Activated CD4-positive, alpha-beta T cell treated with anti-CD3 and anti-CD28 coated beads, Interleukin-2, amount 10 ng/mL, durations not matched to agents 24 days and 14 days (primary cell): ENCODE measurements at regions of chr4 and their contacts with region 1.

Region 1: DNA sequence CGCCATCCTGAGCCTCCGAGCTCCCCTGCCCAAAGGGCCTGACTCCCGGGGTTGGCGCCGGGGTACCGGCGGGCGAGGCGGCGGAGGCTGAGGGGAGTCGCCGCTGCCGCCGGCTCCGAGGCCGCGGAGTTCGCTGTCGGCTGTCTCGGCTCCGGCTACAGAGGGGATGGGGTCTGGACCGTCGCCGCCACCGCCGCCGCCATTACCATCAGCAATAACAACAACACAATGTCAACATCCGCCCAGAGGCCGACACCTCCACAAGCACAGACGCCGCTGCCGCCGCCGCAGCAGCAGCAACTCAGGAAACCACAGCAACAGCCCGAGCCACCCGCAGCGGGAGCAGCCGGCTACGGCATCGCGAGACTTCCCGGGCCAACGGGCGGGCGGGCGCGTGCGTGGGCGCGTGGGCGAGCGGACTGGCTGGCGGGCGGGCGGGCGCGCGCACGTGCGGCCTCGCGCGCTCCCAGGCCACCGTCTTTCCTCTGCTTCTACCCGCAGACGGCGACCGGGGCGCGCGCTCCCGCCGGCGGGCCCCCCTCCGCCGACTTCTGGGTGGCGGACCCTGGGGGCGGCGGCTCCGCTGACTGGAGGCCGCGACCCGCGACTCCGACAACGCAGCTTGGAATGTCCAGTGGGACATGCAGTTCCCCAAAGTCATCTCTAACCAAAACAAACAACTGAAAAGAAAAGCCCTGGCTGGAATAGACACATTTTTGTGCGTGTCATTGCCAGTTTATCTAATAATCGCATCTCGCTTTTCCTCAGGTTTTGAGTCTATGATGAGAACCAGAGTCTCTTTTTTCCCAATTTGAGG is at the start of gene CHIC2:
- DNase-seq: peak; percentile 99
- H3K4me3 Mint-ChIP-seq: peak within 1 kb of the TSS; percentile 96
- H3K27ac Mint-ChIP-seq: peak within 1 kb of the TSS; percentile 92
- H3K4me1 Mint-ChIP-seq: peaks cover 33% of the 10 kb centered on the region
- H3K27me3 Mint-ChIP-seq: peaks cover 3% of the 10 kb centered on the region
- total RNA-seq, gene CHIC2: 20.0 and 23.8 TPM in 2 replicates

Region 2: GRCh38 chr4:52861879-52862616 is 1202.5 kb before region 1 on chr4 and contains the start of gene RASL11B:
- intact Hi-C with region 1: loop called (anchors 10 kb)
- DNase-seq: peak; percentile 96
- H3K4me3 Mint-ChIP-seq: peak within 1 kb of the TSS; percentile 85
- H3K27ac Mint-ChIP-seq: peak within 1 kb of the TSS; percentile 39
- H3K4me1 Mint-ChIP-seq: peaks cover 11% of the 10 kb centered on the region
- H3K27me3 Mint-ChIP-seq: peaks cover 42% of the 10 kb centered on the region
- total RNA-seq, gene RASL11B: 2.0 and 2.2 TPM in 2 replicates

Region 3: DNA sequence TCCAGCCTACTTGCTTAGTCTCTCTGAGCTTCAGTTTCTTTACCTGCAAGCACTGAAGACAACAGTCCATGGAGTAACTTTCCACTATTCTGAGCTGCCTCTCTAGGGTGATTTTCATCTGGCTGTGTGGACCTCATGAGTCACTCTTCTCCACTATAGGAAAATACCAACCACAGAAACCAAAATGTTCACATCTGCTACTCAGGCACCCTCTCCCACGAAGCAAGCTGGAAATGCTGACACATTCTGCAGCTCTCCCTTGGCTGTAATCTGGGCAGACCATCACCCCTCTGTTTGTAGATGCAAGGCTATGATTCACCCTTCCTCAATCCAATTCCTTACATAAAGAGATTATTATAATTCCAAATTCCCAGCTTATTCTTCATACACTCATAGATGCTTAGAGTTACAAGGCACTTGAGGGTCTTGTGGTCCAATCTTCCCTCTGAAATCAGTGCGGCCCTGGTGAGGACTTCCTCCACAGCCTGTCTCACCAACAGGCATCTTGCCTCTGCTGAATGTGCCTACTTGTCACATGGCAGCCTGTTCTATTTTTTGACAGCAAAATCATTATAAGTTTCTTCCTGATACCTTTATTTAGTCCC is 376.2 kb before region 1 on chr4:
- intact Hi-C with region 1: loop called (anchors 5 kb)
- DNase-seq: peak; percentile 57
- H3K4me3 Mint-ChIP-seq: no peak overlapping the region
- H3K27ac Mint-ChIP-seq: peak overlapping the region; percentile 69
- H3K4me1 Mint-ChIP-seq: peaks cover 7% of the 10 kb centered on the region
- H3K27me3 Mint-ChIP-seq: peaks cover 5% of the 10 kb centered on the region

Region 4: DNA sequence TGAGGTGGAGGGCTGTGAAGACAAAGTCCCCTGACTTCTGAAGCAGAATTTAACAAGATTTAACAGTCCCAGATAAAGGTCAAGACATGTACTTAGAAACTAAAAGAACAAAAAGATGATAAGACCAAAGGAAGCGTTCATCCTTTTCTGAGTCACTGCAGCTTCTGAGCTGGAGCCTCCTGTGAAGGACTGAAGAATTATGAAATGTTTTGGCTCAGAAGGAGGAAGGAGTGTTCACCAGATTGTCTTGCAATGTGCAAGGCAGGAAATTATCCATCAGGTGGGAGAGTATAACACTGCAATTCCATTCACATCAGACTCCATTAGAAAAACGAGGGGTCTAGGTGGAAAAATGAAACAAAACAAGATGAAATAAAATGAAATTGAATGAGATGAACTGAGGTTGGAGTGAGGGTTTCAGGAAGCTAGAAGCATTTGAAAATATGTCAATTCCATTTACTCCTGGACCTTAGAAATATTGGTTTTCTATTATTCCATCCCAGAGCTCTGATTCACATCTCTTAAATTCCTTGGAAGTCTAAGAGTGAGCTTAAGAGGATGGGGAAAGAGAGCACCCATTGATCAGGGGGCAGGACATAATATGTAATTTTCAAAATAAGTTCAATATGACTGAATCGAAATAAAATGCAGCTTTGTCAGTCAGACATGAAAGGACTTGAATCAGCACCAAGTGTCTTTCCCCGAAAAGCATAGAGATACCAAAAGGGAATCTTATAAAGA is 287.1 kb before region 1 on chr4:
- intact Hi-C with region 1: no loop called
- DNase-seq: peak; percentile 31
- H3K4me3 Mint-ChIP-seq: no peak overlapping the region
- H3K27ac Mint-ChIP-seq: no peak overlapping the region
- H3K4me1 Mint-ChIP-seq: no peaks in the 10 kb centered on the region
- H3K27me3 Mint-ChIP-seq: no peaks in the 10 kb centered on the region

Region 5: DNA sequence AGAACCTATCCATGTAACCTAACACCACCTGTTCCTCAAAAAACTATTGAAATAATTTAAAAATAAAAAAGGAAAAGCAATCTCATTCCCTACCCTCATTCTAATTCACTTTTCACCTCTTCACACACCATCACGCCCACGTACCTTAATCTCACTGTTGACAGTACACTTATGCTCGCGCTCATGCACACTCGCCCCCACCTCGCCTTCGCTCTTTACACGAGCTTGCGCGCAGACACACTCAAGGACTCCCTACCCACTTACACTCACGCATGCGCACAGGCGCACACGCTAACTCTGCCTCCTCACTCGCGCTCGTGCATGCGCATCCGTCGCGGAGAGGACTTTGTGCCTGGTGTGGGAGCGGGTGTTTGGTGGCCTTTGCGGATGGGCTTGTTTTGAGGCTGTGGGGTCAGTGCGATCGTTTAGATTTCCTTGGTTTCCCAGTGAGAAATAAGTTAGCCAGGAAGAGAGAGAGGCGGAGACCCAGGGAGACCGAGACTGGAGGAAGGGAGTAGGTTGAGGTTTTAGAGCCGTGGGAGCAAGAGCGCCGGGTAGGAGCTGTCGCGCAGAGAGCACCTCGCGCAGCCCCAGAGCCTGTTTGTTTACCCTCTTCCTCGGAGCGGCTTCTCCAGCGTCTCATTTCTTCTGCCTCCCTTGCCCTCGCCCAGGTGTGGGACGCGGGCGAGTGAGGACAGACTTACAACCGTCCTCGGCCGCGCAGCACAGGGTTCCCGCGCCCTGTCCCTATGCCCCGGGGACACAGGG is 27.3 kb after region 1 on chr4:
- intact Hi-C with region 1: loop called (anchors 2 kb)
- DNase-seq: peak; percentile 93
- H3K4me3 Mint-ChIP-seq: peak overlapping the region; percentile 87
- H3K27ac Mint-ChIP-seq: no peak overlapping the region
- H3K4me1 Mint-ChIP-seq: peaks cover 21% of the 10 kb centered on the region
- H3K27me3 Mint-ChIP-seq: peaks cover 77% of the 10 kb centered on the region